CD8-positive, alpha-beta memory T cell (primary cell): ENCODE measurements at regions of chr19 and their contacts with region 1.

Region 1: DNA sequence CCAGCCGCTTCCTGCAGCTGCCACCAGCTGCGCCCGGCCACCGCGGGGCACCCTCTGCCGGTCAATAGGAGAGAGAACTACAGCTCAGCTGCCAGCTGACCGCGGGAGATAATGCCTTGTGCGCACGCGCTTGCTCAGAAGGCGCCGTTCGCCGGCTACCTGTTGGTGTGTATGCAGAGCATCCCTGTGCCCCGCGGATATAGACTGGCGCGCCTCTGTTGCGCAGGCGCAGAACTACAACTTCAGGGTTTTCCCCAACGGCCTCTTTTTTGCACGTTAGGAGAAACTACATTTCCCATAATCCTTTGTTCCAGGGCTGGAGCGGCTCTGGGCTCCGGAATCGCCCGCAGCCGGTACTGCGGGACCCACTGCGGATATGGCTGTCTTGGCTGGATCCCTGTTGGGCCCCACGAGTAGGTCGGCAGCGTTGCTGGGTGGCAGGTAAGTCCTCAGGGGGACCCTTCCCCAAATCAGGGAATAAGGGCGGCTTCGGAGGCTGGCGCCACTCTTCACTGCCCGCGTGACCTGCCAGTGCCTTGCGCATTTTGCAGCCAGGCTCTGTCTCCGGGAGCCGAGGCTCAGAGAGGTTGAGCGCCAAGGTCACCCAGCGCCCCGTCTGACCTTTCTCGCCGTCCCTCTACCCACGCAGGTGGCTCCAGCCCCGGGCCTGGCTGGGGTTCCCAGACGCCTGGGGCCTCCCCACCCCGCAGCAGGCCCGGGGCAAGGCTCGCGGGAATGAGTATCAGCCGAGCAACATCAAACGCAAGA is at the start of gene MRPL34:
- DNase-seq: peak; percentile 88 to 98 (median 94)
- H3K4me3 ChIP-seq: peak within 1 kb of the TSS; percentile 92
- H3K4me3 Mint-ChIP-seq: peak within 1 kb of the TSS; percentile 87 to 100 (median 90)
- H3K27ac ChIP-seq: peak within 1 kb of the TSS; percentile 79
- H3K27ac Mint-ChIP-seq: peak within 1 kb of the TSS; percentile 79 to 99 (median 90)
- H3K4me1 ChIP-seq: peaks cover 41% of the 10 kb centered on the region
- H3K4me1 Mint-ChIP-seq: peaks cover 45 to 67% (median 57%) of the 10 kb centered on the region in 3 donors
- H3K27me3 ChIP-seq: no peaks in the 10 kb centered on the region
- H3K27me3 Mint-ChIP-seq: peaks cover 0 to 2% of the 10 kb centered on the region in 2 donors
- total RNA-seq, gene MRPL34: 136 to 138 TPM

Region 2: GRCh38 chr19:17183858-17184321 is 121.8 kb before region 1 on chr19:
- CTCF ChIA-PET with region 1: no interaction called
- POLR2A ChIA-PET with region 1: no interaction called
- DNase-seq: peak in 2 of 5 donors; percentile 22 to 33
- H3K4me3 ChIP-seq: peak overlapping the region; percentile 70
- H3K4me3 Mint-ChIP-seq: peak overlapping the region; percentile 78 to 91 (median 90)
- H3K27ac ChIP-seq: peak overlapping the region; percentile 58
- H3K27ac Mint-ChIP-seq: peak overlapping the region; percentile 84 to 99 (median 96)
- H3K4me1 ChIP-seq: peaks cover 21% of the 10 kb centered on the region
- H3K4me1 Mint-ChIP-seq: peaks cover 21 to 30% (median 25%) of the 10 kb centered on the region in 3 donors
- H3K27me3 ChIP-seq: no peaks in the 10 kb centered on the region
- H3K27me3 Mint-ChIP-seq: no peaks in the 10 kb centered on the region

Region 3: DNA sequence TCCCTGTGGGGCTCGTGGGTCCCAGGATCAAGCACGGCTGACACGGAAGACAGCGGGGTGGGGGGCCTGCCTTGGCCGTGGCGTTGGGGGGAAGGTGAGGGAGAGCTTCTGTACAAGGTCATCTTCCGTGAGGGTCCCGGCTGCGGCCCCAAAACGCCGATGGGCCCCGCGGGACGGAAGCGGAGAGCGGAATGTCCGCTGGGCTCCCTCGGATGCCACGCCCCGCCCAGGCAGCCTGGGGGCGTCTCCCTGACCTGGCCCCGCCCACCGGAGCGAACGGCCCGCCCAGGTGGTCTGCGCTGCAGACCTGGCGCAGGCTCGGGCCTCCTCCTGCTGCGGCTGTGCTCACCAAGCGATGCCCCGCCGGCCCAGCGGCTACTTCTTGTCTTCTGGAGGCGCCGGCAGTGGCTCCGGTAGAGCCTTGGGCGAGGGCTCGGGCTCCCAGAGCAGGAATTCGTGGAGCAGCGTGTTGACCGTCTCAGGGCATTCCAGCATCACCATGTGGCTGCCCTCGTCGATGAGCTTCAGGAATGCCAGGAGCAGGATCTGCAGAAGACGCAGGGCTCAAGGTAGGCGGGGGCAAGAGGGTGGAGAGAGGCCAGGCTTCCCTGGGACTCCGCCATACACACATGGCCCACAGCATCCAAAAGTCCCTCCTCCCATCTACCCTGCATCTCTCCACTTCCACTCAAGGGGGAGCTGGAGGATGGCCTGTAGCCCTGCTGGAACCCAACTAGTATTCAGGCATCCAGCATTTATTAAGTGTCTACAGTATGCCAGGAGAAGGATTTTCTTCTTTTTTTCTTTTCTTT is 13.2 kb before region 1 on chr19:
- CTCF ChIA-PET with region 1: interaction called, 11 read pairs
- POLR2A ChIA-PET with region 1: interaction called, 8 read pairs
- DNase-seq: peak; percentile 69 to 82 (median 76)
- H3K4me3 ChIP-seq: peak overlapping the region; percentile 79
- H3K4me3 Mint-ChIP-seq: peak overlapping the region; percentile 84 to 94 (median 88)
- H3K27ac ChIP-seq: peak overlapping the region; percentile 31
- H3K27ac Mint-ChIP-seq: peak overlapping the region in 6 of 8 donors; percentile 22 to 88 (median 52)
- H3K4me1 ChIP-seq: no peaks in the 10 kb centered on the region
- H3K4me1 Mint-ChIP-seq: peaks cover 3 to 7% (median 5%) of the 10 kb centered on the region in 3 donors
- H3K27me3 ChIP-seq: no peaks in the 10 kb centered on the region
- H3K27me3 Mint-ChIP-seq: peaks cover 1 to 5% of the 10 kb centered on the region in 2 donors

Region 4: DNA sequence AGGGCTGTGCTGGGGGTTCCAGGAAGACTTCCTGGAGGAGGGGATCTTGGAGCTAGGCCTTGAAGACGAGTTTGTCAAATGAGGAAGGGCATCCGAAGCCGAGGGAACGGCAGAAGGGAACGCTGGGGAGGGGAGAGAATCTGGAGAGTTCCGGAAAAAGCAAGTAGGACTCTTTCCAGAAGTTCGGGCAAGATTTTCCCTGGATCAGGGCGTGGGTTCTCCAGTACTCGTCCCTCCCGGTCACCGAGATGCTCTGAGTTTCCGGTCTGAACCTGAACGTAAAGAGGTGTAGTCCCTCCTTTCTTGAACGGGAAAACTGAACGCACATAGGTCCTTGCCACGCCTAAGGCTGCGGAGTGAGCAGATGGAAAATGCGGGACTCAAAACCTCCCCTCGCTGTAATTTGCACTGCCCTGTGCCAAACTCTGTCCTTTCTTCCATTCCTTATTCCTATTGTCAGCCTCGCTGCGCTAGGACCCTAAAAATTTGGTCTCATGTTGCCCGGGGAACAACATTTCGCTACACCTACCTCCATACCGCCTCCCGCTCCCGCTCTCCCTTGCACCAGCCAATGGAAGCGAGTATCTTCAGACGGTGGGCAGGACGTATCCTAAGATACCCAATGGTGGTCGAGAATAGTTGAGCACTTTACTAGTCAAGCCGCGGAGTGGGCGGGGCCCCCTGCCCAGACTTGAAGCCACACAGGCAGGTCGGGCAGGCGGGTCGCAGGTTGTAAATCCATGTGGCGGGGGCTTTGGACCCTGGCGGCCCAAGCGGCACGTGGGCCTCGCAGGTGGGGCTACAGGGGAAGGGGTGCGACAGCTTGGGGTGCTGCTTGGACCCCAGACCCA is 31.4 kb after region 1 on chr19 and contains the start of gene GTPBP3:
- CTCF ChIA-PET with region 1: interaction called, 13 read pairs
- POLR2A ChIA-PET with region 1: interaction called, 13 read pairs
- DNase-seq: peak; percentile 95 to 98 (median 95)
- H3K4me3 ChIP-seq: peak within 1 kb of the TSS; percentile 94
- H3K4me3 Mint-ChIP-seq: peak within 1 kb of the TSS; percentile 83 to 94 (median 90)
- H3K27ac ChIP-seq: peak within 1 kb of the TSS; percentile 91
- H3K27ac Mint-ChIP-seq: peak within 1 kb of the TSS; percentile 84 to 99 (median 92)
- H3K4me1 ChIP-seq: peaks cover 24% of the 10 kb centered on the region
- H3K4me1 Mint-ChIP-seq: peaks cover 26 to 50% (median 33%) of the 10 kb centered on the region in 3 donors
- H3K27me3 ChIP-seq: no peaks in the 10 kb centered on the region
- H3K27me3 Mint-ChIP-seq: no peaks in the 10 kb centered on the region
- total RNA-seq, gene GTPBP3: 47.3 to 55.7 TPM

Region 5: DNA sequence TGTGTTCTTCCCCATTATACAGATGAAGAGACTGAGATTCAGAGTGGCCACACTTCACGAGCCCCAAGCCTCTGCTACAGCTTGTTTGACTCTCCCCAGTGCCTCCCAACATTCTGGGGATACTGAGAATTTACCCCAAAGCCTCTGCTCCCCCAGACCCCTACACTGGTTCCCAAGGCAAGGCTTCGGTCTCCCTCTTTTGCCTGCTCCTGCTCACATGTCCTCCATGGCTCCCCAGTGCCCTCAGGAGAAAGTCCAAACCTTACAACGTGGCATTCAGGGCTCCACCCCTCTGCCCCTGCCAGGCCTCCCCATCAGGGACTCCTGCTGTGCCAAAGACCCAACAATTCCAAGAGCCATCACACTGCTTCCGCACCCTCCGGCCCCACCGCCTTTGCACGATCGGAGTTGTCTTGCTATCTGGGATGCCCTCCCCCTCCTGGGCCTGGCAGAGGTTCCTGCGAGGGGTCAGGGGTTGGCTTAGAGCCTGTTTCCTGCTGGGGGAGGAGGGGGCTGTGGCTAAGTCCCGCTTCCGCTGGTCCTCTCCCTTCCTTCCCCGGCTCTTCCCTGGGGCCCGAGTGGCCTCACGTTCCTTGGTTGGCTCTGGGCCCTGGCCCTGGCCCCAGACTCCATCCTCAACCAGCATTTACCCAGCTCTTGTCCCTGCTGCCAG is 47.0 kb after region 1 on chr19:
- CTCF ChIA-PET with region 1: no interaction called
- POLR2A ChIA-PET with region 1: no interaction called
- DNase-seq: no peak
- H3K4me3 ChIP-seq: no peak overlapping the region
- H3K4me3 Mint-ChIP-seq: no peak overlapping the region
- H3K27ac ChIP-seq: no peak overlapping the region
- H3K27ac Mint-ChIP-seq: no peak overlapping the region
- H3K4me1 ChIP-seq: no peaks in the 10 kb centered on the region
- H3K4me1 Mint-ChIP-seq: peaks cover 0 to 6% (median 0%) of the 10 kb centered on the region in 3 donors
- H3K27me3 ChIP-seq: peaks cover 6% of the 10 kb centered on the region
- H3K27me3 Mint-ChIP-seq: peaks cover 13 to 40% of the 10 kb centered on the region in 2 donors